Spleen (tissue), 13 donors: ENCODE measurements at regions of chr19 and their contacts with region 1.

Region 1: GRCh38 chr19:2273356-2274184 is 8.4 kb downstream of the PEAK3 start:
- DNase-seq: peak; percentile 96
- H3K4me3 ChIP-seq: peak overlapping the region; percentile 6 to 100 (median 68)
- H3K27ac ChIP-seq: peak overlapping the region; percentile 72 to 100 (median 98)
- H3K4me1 ChIP-seq: peaks cover 43 to 82% (median 68%) of the 10 kb centered on the region in 6 donors
- H3K27me3 ChIP-seq: no peaks in the 10 kb centered on the region
- CTCF ChIP-seq: peak; percentile 86 to 100 (median 98)
- POLR2A ChIP-seq: peak in 2 of 3 donors; percentile 22 to 31

Region 2: GRCh38 chr19:2154587-2155075 is 118.9 kb before region 1 on chr19:
- intact Hi-C with region 1: loop called (anchors 5 kb)
- DNase-seq: no peak
- H3K4me3 ChIP-seq: no peak overlapping the region
- H3K27ac ChIP-seq: no peak overlapping the region
- H3K4me1 ChIP-seq: peaks cover 8 to 39% (median 30%) of the 10 kb centered on the region in 6 donors
- H3K27me3 ChIP-seq: no peaks in the 10 kb centered on the region
- CTCF ChIP-seq: no peak
- POLR2A ChIP-seq: no peak

Region 3: DNA sequence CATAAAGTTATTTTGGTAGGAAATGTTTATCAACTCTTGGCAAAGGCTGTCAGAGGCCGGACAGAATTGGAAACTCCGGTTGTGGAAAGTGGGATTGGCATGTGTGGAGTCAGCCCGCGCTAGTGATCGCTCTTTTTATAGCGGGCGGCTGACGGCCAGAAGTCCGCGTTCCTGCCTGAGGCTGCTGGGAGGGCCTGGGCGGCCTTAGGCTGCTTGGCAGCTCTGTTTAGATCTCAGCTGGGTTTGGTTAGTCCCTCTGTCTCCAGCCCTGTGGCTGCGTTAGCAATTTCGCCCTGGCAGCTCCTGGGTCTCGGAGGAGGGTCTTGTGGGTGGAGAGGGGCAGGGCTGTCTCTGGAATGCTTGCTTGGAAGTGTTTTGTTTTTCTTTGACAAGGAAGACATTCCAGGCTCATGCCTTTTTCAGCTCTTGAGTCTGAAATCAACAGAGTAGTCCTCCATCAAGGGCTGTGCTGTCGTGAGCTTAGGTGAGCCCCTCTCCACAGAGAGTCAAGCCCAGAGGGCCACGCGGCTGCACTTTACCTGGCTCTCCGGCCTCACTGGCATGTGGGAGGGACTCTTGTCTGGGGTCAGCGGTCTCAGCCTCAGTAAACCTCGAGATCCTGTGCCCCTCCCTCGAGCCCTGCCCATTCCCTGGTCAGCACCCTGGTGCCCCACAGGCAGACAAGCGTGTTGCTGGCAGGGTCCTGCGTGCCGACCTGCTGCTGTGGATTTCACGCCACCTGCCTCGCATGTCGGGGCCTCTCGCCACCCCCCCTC is 87.3 kb before region 1 on chr19:
- intact Hi-C with region 1: no loop called
- DNase-seq: no peak
- H3K4me3 ChIP-seq: no peak overlapping the region
- H3K27ac ChIP-seq: peak overlapping the region in 6 of 8 donors; percentile 54 to 72 (median 56)
- H3K4me1 ChIP-seq: peaks cover 7 to 81% (median 49%) of the 10 kb centered on the region in 6 donors
- H3K27me3 ChIP-seq: no peaks in the 10 kb centered on the region
- CTCF ChIP-seq: no peak
- POLR2A ChIP-seq: no peak